ENCODE measurements at regions of chr10 and their contacts with region 1.

Region 1: DNA sequence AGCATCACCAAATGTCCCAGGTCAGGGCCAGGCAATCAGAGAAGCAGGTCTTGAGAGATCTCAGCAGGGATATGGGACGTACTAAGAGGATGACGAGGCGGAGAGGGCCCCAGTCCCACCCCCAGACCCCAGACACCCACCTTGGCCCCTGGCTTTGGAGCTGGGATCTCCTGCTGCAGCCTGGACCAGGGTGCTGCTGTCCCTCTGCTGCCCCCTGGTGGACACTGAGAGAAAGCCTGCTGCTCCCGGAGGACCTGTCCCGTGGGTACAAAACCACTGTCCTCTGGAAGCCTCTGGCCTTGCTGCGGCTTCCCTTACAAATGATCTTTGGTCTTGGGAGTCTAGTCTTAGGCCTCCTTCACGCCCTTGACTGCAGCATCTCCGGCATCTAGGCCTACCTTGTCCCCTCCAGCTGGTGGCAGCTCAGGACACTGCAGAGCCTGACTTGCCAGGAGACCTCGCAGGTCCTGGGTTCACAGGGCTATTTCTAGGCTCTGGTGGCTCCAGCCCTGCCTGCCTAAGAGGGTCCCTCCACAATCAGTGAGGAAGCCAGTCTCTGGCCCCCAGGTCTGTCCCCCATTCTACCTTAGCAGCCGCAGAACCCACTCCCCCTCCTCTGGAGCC is 97.1 kb downstream of the RGS10 start:
- DNase-seq: peak; percentile 82
- H3K4me3 ChIP-seq: no peak overlapping the region
- H3K27ac ChIP-seq: no peak overlapping the region
- H3K4me1 ChIP-seq: peaks cover 26% of the 10 kb centered on the region
- CTCF ChIP-seq: peak; percentile 92

Region 2: GRCh38 chr10:119425881-119426170 is 19.6 kb before region 1 on chr10:
- CTCF ChIA-PET with region 1: interaction called, 13 read pairs
- POLR2A ChIA-PET with region 1: no interaction called
- intact Hi-C with region 1: no loop called
- DNase-seq: no peak
- H3K4me3 ChIP-seq: no peak overlapping the region
- H3K27ac ChIP-seq: no peak overlapping the region
- H3K4me1 ChIP-seq: peaks cover 14% of the 10 kb centered on the region
- CTCF ChIP-seq: no peak